ENCODE measurements at regions of chr12 and their contacts with region 1.

Region 1: GRCh38 chr12:124863416-124864325 is at the start of gene SCARB1:
- DNase-seq: peak; percentile 62 to 71
- ATAC-seq: peak; percentile 78 to 84
- H3K4me3 ChIP-seq: peak within 1 kb of the TSS; percentile 61 to 88 (median 81)
- H3K27ac ChIP-seq: peak within 1 kb of the TSS; percentile 64 to 82 (median 77)
- H3K4me1 ChIP-seq: peaks cover 3 to 18% of the 10 kb centered on the region in 2 donors
- H3K27me3 ChIP-seq: no peaks in the 10 kb centered on the region
- CTCF ChIP-seq: no peak
- POLR2A ChIP-seq: peak; percentile 34 to 71
- total RNA-seq, gene SCARB1: 5.4 to 8.7 (median 6.2) TPM

Region 2: GRCh38 chr12:124795081-124795948 is 68.4 kb before region 1 on chr12:
- in situ Hi-C with region 1: no loop called
- intact Hi-C with region 1: no loop called
- DNase-seq: no peak
- ATAC-seq: no peak
- H3K4me3 ChIP-seq: no peak overlapping the region
- H3K27ac ChIP-seq: no peak overlapping the region
- H3K4me1 ChIP-seq: peaks cover 0 to 3% of the 10 kb centered on the region in 2 donors
- H3K27me3 ChIP-seq: no peaks in the 10 kb centered on the region
- CTCF ChIP-seq: no peak
- POLR2A ChIP-seq: no peak

Region 3: DNA sequence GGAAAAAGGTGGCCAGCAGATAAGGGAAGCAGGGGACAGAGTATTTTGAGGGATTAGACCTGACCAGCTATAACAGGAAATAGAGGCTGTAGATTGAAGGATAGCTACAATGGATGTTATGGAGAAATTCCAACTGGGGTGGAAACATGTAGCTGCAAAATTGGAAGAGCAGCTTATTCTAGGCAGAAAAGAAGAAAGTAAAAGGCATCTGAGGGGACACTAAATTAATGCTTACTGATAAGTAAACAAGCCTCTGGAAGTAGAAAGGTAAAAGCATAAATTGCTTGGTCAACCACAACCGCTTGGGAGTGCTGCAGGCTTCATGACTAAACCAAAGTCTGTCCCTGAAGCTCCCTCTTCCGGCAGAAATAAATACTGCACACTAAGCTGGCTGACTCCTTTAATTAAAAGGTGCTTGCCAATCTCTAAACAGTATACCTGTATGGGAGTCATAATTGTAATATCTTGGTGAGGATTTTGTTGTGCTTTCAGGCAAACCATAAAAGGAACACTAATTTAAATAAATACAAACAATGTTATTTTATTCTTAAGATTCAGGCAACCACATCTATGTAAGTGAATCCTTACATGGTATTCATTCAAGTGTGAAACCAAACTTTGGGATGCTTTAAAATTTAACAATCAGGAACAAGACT is 43.1 kb after region 1 on chr12:
- in situ Hi-C with region 1: no loop called
- intact Hi-C with region 1: loop called (anchors 2 kb)
- DNase-seq: peak; percentile 88
- ATAC-seq: peak; percentile 52
- H3K4me3 ChIP-seq: no peak overlapping the region
- H3K27ac ChIP-seq: peak overlapping the region; percentile 56 to 78 (median 60)
- H3K4me1 ChIP-seq: peaks cover 29 to 32% of the 10 kb centered on the region in 2 donors
- H3K27me3 ChIP-seq: no peaks in the 10 kb centered on the region
- CTCF ChIP-seq: peak; percentile 90 to 98 (median 97)
- POLR2A ChIP-seq: no peak

Region 4: GRCh38 chr12:124947561-124948398 is 84.1 kb after region 1 on chr12:
- in situ Hi-C with region 1: no loop called
- intact Hi-C with region 1: no loop called
- DNase-seq: no peak
- ATAC-seq: no peak
- H3K4me3 ChIP-seq: no peak overlapping the region
- H3K27ac ChIP-seq: no peak overlapping the region
- H3K4me1 ChIP-seq: no peaks in the 10 kb centered on the region
- H3K27me3 ChIP-seq: no peaks in the 10 kb centered on the region
- CTCF ChIP-seq: no peak
- POLR2A ChIP-seq: no peak

Measured in gastrocnemius medialis (tissue), 4 donors.